ENCODE measurements at regions of chr11 and their contacts with region 1.

Region 1: GRCh38 chr11:113289431-113290187 is 24.8 kb upstream of the TTC12 start:
- DNase-seq: peak; percentile 83
- H3K4me3 ChIP-seq: no peak overlapping the region
- H3K27ac ChIP-seq: no peak overlapping the region
- H3K4me1 ChIP-seq: no peaks in the 10 kb centered on the region
- H3K27me3 ChIP-seq: no peaks in the 10 kb centered on the region
- CTCF ChIP-seq: peak; percentile 95

Region 2: DNA sequence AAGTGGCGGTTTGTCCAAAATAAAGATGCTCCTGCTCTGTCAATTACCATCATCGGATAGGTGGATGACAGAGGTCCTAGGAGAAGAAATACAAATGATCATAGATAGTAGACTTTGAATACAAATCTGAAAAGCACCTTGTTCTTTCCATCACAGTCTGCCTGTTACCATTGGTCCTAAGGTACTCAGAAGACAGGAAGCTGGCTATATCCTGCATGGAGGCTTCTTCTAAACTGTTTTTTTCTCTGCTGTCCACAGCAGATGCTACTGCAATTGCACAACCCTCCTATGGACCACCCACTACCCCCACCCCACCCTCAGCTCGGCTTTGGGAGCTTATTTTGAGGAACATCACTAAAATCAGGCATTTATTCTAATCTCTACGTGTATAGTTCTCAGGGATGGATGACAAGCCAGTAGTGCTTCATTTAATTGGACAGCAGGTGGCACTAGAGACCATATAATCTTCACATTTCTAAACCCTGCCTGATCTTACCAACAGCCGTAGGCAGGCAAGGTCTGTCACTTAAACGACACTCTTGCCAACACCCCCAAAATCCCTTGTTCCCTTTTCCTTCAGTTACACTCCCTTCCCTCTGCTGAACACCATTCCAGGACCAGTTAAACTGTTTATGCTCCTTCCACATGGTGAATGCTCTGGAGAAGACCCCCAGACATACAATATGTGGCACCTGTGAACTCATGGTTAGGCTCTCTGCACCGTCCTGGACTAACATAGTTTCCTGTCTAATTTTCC is 1070.0 kb before region 1 on chr11:
- CTCF ChIA-PET with region 1: no interaction called
- POLR2A ChIA-PET with region 1: no interaction called
- intact Hi-C with region 1: loop called (anchors 2 kb)
- DNase-seq: peak; percentile 90
- H3K4me3 ChIP-seq: no peak overlapping the region
- H3K27ac ChIP-seq: no peak overlapping the region
- H3K4me1 ChIP-seq: peaks cover 27% of the 10 kb centered on the region
- H3K27me3 ChIP-seq: no peaks in the 10 kb centered on the region
- CTCF ChIP-seq: peak; percentile 90

Region 3: GRCh38 chr11:112440518-112440917 is 849.1 kb before region 1 on chr11:
- CTCF ChIA-PET with region 1: interaction called, 6 read pairs
- POLR2A ChIA-PET with region 1: no interaction called
- intact Hi-C with region 1: loop called (anchors 5 kb)
- DNase-seq: peak; percentile 74
- H3K4me3 ChIP-seq: no peak overlapping the region
- H3K27ac ChIP-seq: no peak overlapping the region
- H3K4me1 ChIP-seq: no peaks in the 10 kb centered on the region
- H3K27me3 ChIP-seq: no peaks in the 10 kb centered on the region
- CTCF ChIP-seq: peak; percentile 81

Region 4: GRCh38 chr11:112795142-112795815 is 494.3 kb before region 1 on chr11:
- CTCF ChIA-PET with region 1: interaction called, 6 read pairs
- POLR2A ChIA-PET with region 1: no interaction called
- intact Hi-C with region 1: loop called (anchors 5 kb)
- DNase-seq: peak; percentile 81
- H3K4me3 ChIP-seq: no peak overlapping the region
- H3K27ac ChIP-seq: no peak overlapping the region
- H3K4me1 ChIP-seq: no peaks in the 10 kb centered on the region
- H3K27me3 ChIP-seq: no peaks in the 10 kb centered on the region
- CTCF ChIP-seq: peak; percentile 81

Region 5: DNA sequence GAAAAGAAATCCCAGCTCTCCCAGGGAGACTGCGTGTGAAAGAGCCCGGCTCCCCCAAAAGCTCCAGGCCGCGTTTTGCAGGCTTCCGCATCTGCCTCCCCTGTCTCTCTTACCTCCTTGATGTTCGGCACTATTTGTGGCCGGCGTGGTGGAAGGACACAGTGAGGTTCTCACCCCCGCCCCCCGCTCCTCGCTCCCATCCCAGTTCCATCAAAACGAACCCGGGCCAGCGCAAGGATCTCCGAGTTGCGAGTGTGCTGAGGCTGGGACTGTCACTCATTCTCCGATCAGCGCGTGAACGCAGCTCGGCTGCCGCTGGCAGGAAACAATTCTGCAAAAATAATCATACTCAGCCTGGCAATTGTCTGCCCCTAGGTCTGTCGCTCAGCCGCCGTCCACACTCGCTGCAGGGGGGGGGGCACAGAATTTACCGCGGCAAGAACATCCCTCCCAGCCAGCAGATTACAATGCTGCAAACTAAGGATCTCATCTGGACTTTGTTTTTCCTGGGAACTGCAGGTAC is 328.4 kb before region 1 on chr11 and contains the start of gene NCAM1:
- CTCF ChIA-PET with region 1: no interaction called
- POLR2A ChIA-PET with region 1: no interaction called
- intact Hi-C with region 1: loop called (anchors 5 kb)
- DNase-seq: peak; percentile 96
- H3K4me3 ChIP-seq: peak within 1 kb of the TSS; percentile 61
- H3K27ac ChIP-seq: no peak within 1 kb of the TSS
- H3K4me1 ChIP-seq: peaks cover 3% of the 10 kb centered on the region
- H3K27me3 ChIP-seq: peaks cover 35% of the 10 kb centered on the region
- CTCF ChIP-seq: no peak
- total RNA-seq, gene NCAM1: 12.0 and 14.3 TPM in 2 replicates

Region 6: GRCh38 chr11:113073290-113073953 is 216.2 kb before region 1 on chr11:
- CTCF ChIA-PET with region 1: no interaction called
- POLR2A ChIA-PET with region 1: no interaction called
- intact Hi-C with region 1: no loop called
- DNase-seq: no peak
- H3K4me3 ChIP-seq: no peak overlapping the region
- H3K27ac ChIP-seq: no peak overlapping the region
- H3K4me1 ChIP-seq: no peaks in the 10 kb centered on the region
- H3K27me3 ChIP-seq: no peaks in the 10 kb centered on the region
- CTCF ChIP-seq: no peak

Region 7: GRCh38 chr11:113119074-113119473 is 170.5 kb before region 1 on chr11:
- CTCF ChIA-PET with region 1: no interaction called
- POLR2A ChIA-PET with region 1: no interaction called
- intact Hi-C with region 1: loop called (anchors 2 kb)
- DNase-seq: peak; percentile 36
- H3K4me3 ChIP-seq: no peak overlapping the region
- H3K27ac ChIP-seq: no peak overlapping the region
- H3K4me1 ChIP-seq: no peaks in the 10 kb centered on the region
- H3K27me3 ChIP-seq: no peaks in the 10 kb centered on the region
- CTCF ChIP-seq: no peak